ENCODE measurements at regions of chr13 and their contacts with region 1.

Region 1: GRCh38 chr13:45367358-45367757 is 26.4 kb upstream of the TPT1 start:
- DNase-seq: peak; percentile 85 to 99 (median 92)
- H3K4me3 ChIP-seq: no peak overlapping the region
- H3K4me3 Mint-ChIP-seq: peak overlapping the region; percentile 35 to 79 (median 64)
- H3K27ac ChIP-seq: peak overlapping the region; percentile 50
- H3K27ac Mint-ChIP-seq: peak overlapping the region; percentile 93 to 97 (median 93)
- H3K4me1 ChIP-seq: peaks cover 42% of the 10 kb centered on the region
- H3K4me1 Mint-ChIP-seq: peaks cover 35 to 62% (median 49%) of the 10 kb centered on the region in 4 donors
- H3K27me3 ChIP-seq: no peaks in the 10 kb centered on the region
- H3K27me3 Mint-ChIP-seq: no peaks in the 10 kb centered on the region

Region 2: DNA sequence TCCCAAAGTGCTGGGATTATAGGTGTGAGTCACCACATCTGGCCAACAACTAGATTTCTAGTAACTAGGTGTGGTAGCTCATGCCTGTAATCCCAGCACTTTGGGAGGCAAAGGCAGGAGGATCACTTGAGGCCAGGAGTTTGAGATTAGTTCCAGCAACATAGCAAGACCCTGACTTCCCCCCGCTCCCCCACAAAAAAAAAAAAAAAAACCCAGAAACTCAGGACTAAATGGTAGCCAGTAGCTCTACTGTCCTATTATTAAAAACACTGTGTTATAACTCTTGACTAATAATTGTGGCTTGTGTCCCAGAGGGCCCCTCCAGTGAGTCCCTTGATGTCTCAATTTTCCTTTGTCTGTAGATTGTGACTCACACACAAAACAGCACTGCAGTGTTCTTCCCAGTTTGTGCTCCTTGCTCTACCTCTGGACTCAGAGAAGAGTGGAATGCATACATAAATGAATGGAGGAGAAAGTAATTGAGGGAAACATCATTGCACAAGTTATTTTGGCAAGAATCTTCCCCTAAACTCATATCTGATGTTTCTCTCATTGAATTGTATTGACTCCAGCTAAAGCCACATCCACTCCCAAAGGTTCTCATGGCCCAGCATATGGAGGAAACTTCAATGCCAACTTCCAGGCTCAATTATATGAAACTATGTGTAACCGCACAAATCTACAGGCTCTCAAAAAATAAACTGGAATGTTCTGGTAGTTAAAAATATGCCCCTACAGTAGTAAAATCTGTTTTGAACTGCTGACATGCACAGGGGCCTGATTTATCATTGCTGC is 35.1 kb before region 1 on chr13:
- CTCF ChIA-PET with region 1: interaction called, 16 read pairs
- POLR2A ChIA-PET with region 1: interaction called, 219 read pairs
- intact Hi-C with region 1: loop called (anchors 5 kb)
- DNase-seq: no peak
- H3K4me3 ChIP-seq: no peak overlapping the region
- H3K4me3 Mint-ChIP-seq: peak overlapping the region in 3 of 8 donors; percentile 2 to 14 (median 12)
- H3K27ac ChIP-seq: no peak overlapping the region
- H3K27ac Mint-ChIP-seq: peak overlapping the region; percentile 38 to 87 (median 80)
- H3K4me1 ChIP-seq: peaks cover 98% of the 10 kb centered on the region
- H3K4me1 Mint-ChIP-seq: peaks cover 66 to 99% (median 84%) of the 10 kb centered on the region in 4 donors
- H3K27me3 ChIP-seq: no peaks in the 10 kb centered on the region
- H3K27me3 Mint-ChIP-seq: no peaks in the 10 kb centered on the region

Region 3: DNA sequence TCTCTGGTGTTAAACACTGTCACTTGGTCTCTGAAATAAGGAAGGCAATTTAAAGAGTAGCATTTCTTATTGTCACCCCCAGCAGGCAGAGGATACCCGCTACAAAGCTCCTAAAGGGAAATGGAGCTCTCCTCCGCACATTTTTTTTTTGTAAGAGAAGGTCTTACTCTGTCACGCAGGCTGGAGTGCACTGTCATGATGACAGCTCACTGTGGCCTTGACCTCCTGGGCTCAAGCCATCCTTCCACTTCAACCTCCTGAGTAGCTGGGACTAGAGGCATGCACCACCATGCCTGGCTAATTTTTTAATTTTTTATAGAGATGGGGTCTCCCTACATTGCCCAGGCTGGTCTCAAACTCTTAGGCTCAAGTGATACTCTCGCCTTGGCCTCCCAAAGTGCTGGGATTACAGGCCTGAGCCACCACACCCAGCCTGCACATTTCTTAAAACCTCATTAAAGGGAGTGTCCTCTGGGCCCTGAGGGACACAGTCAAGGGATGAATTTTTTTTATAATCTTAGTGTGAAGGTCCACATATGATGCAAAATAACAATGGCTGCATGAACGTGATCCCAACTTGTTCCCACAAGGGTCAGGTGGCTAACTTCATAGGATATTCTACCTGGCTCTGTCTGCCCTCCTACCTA is 18.7 kb after region 1 on chr13:
- CTCF ChIA-PET with region 1: interaction called, 128 read pairs
- POLR2A ChIA-PET with region 1: interaction called, 7 read pairs
- intact Hi-C with region 1: no loop called
- DNase-seq: no peak
- H3K4me3 ChIP-seq: no peak overlapping the region
- H3K4me3 Mint-ChIP-seq: no peak overlapping the region
- H3K27ac ChIP-seq: no peak overlapping the region
- H3K27ac Mint-ChIP-seq: peak overlapping the region in 2 of 7 donors; percentile 22 to 42
- H3K4me1 ChIP-seq: no peaks in the 10 kb centered on the region
- H3K4me1 Mint-ChIP-seq: peaks cover 0 to 4% (median 0%) of the 10 kb centered on the region in 4 donors
- H3K27me3 ChIP-seq: no peaks in the 10 kb centered on the region
- H3K27me3 Mint-ChIP-seq: no peaks in the 10 kb centered on the region

Region 4: DNA sequence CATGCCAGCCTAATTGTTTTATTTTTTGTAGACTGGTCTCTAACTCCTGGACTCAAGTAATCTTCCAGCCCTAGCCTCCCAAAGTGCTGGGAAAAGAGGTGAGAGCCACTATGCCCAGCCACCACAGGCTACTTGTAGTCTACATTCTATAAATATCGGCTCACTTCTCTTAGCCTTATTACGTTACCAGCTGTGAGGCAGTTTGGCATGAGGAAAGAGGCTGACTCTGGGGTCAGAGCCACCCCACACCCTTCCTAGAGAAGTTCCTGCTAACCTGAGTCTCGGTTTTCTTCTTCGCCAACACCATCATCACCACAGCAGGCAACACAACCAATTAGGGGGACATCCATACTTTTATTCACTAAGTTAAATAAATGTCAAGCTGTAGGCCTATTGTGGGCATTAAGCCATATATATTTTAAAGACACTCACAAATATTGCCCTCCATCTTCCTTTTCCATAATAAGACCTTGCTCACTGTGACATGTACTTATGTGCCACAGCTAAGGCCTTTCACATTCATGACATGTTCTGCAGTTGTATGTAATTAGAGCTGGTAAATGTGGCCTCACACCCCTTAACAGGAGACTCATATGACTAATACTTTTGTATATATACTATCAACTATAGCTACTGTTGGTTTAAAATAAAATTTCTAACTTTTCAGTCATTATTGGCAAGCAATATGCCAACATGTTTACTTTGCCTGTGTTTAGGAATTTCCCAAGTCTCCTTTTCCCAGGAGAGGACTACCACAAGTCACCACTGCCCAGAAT is 45.1 kb after region 1 on chr13:
- CTCF ChIA-PET with region 1: interaction called, 25 read pairs
- POLR2A ChIA-PET with region 1: interaction called, 27 read pairs
- intact Hi-C with region 1: no loop called
- DNase-seq: no peak
- H3K4me3 ChIP-seq: no peak overlapping the region
- H3K4me3 Mint-ChIP-seq: no peak overlapping the region
- H3K27ac ChIP-seq: no peak overlapping the region
- H3K27ac Mint-ChIP-seq: no peak overlapping the region
- H3K4me1 ChIP-seq: peaks cover 45% of the 10 kb centered on the region
- H3K4me1 Mint-ChIP-seq: peaks cover 23 to 52% (median 38%) of the 10 kb centered on the region in 4 donors
- H3K27me3 ChIP-seq: no peaks in the 10 kb centered on the region
- H3K27me3 Mint-ChIP-seq: no peaks in the 10 kb centered on the region

Region 5: GRCh38 chr13:45464687-45465453 is 97.5 kb after region 1 on chr13 and contains the start of gene COG3:
- CTCF ChIA-PET with region 1: interaction called, 12 read pairs
- POLR2A ChIA-PET with region 1: interaction called, 12 read pairs
- intact Hi-C with region 1: loop called (anchors 1 kb)
- DNase-seq: peak; percentile 94 to 97 (median 97)
- H3K4me3 ChIP-seq: peak within 1 kb of the TSS; percentile 62 to 81
- H3K4me3 Mint-ChIP-seq: peak within 1 kb of the TSS; percentile 90 to 95 (median 92)
- H3K27ac ChIP-seq: peak within 1 kb of the TSS; percentile 98
- H3K27ac Mint-ChIP-seq: peak within 1 kb of the TSS; percentile 88 to 97 (median 94)
- H3K4me1 ChIP-seq: peaks cover 53% of the 10 kb centered on the region
- H3K4me1 Mint-ChIP-seq: peaks cover 36 to 65% (median 49%) of the 10 kb centered on the region in 4 donors
- H3K27me3 ChIP-seq: no peaks in the 10 kb centered on the region
- H3K27me3 Mint-ChIP-seq: no peaks in the 10 kb centered on the region
- total RNA-seq, gene COG3: 51.1 to 59.8 TPM

Region 6: GRCh38 chr13:45879670-45880069 is 512.3 kb after region 1 on chr13:
- CTCF ChIA-PET with region 1: no interaction called
- POLR2A ChIA-PET with region 1: no interaction called
- intact Hi-C with region 1: no loop called
- DNase-seq: no peak
- H3K4me3 ChIP-seq: no peak overlapping the region
- H3K4me3 Mint-ChIP-seq: no peak overlapping the region
- H3K27ac ChIP-seq: no peak overlapping the region
- H3K27ac Mint-ChIP-seq: no peak overlapping the region
- H3K4me1 ChIP-seq: no peaks in the 10 kb centered on the region
- H3K4me1 Mint-ChIP-seq: no peaks in the 10 kb centered on the region
- H3K27me3 ChIP-seq: no peaks in the 10 kb centered on the region
- H3K27me3 Mint-ChIP-seq: peaks cover 6 to 16% of the 10 kb centered on the region in 2 donors

Region 7: GRCh38 chr13:46059411-46059810 is 692.1 kb after region 1 on chr13:
- CTCF ChIA-PET with region 1: no interaction called
- POLR2A ChIA-PET with region 1: no interaction called
- intact Hi-C with region 1: no loop called
- DNase-seq: no peak
- H3K4me3 ChIP-seq: no peak overlapping the region
- H3K4me3 Mint-ChIP-seq: no peak overlapping the region
- H3K27ac ChIP-seq: no peak overlapping the region
- H3K27ac Mint-ChIP-seq: no peak overlapping the region
- H3K4me1 ChIP-seq: no peaks in the 10 kb centered on the region
- H3K4me1 Mint-ChIP-seq: no peaks in the 10 kb centered on the region
- H3K27me3 ChIP-seq: peaks cover 4% of the 10 kb centered on the region
- H3K27me3 Mint-ChIP-seq: peaks cover 5 to 9% of the 10 kb centered on the region in 2 donors

Measured in CD4-positive, alpha-beta memory T cell (primary cell).